RWPE1 (cell line): ENCODE measurements at regions of chr17 and their contacts with region 1.

Region 1: GRCh38 chr17:63434876-63435684 is 11.0 kb downstream of the CYB561 start:
- DNase-seq: peak; percentile 80
- H3K27ac ChIP-seq: peak overlapping the region; percentile 87
- CTCF ChIP-seq: peak; percentile 48

Region 2: DNA sequence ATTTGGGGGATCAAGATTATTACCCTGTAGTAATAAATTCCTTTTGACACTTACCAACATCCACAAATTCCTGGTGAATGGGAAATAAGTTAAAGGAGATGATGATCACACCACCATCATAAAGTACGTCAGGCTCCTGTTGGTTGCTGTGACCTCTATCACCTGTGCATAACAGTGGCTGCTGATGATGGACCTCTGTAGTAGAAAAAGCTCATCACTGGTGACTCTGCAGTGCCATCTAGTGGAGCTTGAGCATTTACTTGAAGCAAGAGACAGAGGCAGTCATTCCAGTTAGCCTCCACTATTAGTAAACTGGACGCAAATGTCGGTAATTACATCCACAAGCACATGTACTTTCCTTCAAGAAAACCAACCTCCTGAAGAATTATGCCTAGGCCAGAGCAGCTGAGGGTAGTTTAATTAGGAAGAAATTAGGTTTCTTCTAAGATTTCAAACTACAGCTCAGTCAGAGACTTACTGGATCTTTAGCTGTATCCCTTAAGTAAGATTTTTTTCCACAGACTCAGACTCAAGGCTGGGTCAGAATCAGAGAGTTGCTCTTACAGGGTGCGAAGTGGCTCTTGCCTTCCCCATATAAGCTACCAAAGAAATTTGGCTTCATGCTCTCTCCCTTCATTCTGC is 28.3 kb before region 1 on chr17:
- CTCF ChIA-PET with region 1: no interaction called
- POLR2A ChIA-PET with region 1: no interaction called
- DNase-seq: peak; percentile 74
- H3K27ac ChIP-seq: no peak overlapping the region
- CTCF ChIP-seq: peak; percentile 87

Region 3: GRCh38 chr17:63445979-63446691 is 11.1 kb after region 1 on chr17 and contains the start of gene CYB561:
- CTCF ChIA-PET with region 1: interaction called, 28 read pairs
- POLR2A ChIA-PET with region 1: interaction called, 3 read pairs
- DNase-seq: peak; percentile 84
- H3K27ac ChIP-seq: peak within 1 kb of the TSS; percentile 78
- CTCF ChIP-seq: peak; percentile 84